Activated naive CD8-positive, alpha-beta T cell treated with anti-CD3 and anti-CD28 coated beads, Interleukin-2, amount 10 ng/mL, durations not matched to agents 7 days and 5 days (primary cell): ENCODE measurements at regions of chr19 and their contacts with region 1.

Region 1: GRCh38 chr19:39435499-39436349 is at the start of gene RPS16:
- DNase-seq: peak; percentile 100
- ATAC-seq: peak; percentile 87
- H3K4me3 Mint-ChIP-seq: peak within 1 kb of the TSS; percentile 100
- H3K27ac Mint-ChIP-seq: peak within 1 kb of the TSS; percentile 99
- H3K4me1 Mint-ChIP-seq: peaks cover 42% of the 10 kb centered on the region
- H3K27me3 Mint-ChIP-seq: peaks cover 3% of the 10 kb centered on the region
- total RNA-seq, gene RPS16: 2,294 to 2,369 TPM

Region 2: GRCh38 chr19:39293394-39293793 is 142.3 kb before region 1 on chr19:
- POLR2A ChIA-PET with region 1: no interaction called
- DNase-seq: no peak
- ATAC-seq: no peak
- H3K4me3 Mint-ChIP-seq: no peak overlapping the region
- H3K27ac Mint-ChIP-seq: no peak overlapping the region
- H3K4me1 Mint-ChIP-seq: peaks cover 26% of the 10 kb centered on the region
- H3K27me3 Mint-ChIP-seq: peaks cover 29% of the 10 kb centered on the region

Region 3: DNA sequence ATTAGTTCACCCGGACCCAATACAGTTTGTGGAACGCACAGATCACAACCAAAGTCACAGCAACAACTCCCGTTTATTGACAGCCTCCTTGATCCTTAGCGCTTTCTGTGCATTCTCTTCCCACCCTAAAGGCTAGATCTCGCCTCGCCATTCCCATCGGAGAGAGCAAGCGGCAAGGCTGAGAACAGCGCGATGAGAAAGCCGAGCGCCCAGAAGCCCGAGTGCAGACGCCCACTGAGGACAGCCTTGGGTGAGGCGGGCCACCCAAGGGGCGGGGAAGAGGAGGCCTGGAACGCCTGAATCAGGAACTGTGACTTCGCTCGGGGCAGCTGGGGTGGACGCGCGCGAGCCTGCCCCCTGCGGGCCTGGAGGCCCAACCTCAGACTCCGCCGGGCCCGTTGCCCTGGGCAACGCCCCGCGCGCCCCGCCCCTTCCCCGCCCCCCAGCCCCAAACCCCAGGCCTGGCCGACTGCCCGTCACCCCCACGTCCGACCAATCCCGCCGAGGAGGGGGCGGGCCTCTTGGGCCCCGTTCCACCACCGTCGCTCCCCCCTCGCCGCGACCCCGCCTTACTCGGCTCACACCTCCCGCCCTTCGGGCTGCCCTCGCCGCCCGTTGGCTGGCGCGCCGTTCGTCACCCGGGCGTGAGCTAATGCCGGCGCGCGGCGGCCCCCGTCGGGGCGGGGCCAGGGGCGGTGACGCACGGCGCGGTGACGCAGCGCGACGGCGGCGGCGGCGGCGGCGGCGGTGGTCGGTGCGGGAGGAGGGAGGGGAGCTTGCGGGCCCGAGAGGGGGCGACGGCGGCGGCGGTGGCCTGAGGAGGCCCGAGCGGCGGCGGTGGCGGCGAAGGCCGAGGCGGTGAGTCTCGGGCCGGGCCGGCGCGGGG is 93.8 kb before region 1 on chr19 and contains the start of gene SAMD4B:
- POLR2A ChIA-PET with region 1: interaction called, 12 read pairs
- DNase-seq: peak; percentile 99
- ATAC-seq: peak; percentile 89
- H3K4me3 Mint-ChIP-seq: peak within 1 kb of the TSS; percentile 96
- H3K27ac Mint-ChIP-seq: peak within 1 kb of the TSS; percentile 96
- H3K4me1 Mint-ChIP-seq: peaks cover 51% of the 10 kb centered on the region
- H3K27me3 Mint-ChIP-seq: no peaks in the 10 kb centered on the region
- total RNA-seq, gene SAMD4B: 47.8 to 51.3 TPM

Region 4: DNA sequence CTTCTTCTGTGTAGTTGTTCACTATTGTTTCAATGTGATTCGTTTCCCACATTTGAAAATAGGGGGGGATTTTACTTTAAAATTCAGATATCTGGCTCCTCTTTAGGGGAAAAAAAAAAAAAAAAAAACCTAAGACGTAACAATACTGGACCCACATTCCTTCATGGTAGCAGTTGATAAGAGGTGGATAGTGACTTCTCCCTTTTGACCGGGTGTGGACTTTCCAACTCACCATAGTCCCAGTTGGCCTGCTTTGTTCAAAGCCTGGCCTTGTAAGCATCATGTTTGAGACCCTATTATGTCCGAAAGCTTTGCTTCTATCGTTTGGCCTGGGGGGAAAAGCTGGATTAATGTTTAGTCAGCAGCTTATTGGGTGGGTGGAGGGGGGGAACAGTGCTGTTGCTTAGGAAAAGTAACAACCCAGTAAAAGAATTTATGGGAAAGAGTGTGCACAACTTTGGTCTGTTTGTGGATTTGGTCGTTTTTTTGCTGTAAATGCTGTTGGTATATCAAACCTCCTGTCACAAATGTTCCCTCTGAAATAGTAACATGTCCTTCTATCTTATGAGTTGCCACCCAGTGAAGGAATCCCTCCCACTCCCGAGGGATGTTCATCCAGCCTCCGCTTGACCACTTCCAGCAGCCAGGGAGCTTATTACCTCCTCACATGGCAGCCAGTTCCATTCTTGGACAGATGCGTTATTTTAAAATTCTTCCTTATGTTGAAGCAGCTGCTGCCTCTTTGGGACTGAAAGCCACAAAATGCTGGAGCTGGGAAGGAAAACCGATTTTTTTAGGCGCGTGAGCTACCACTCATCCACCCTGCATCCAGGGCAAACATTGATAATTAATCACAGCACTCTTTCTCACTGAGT is 83.1 kb before region 1 on chr19:
- POLR2A ChIA-PET with region 1: no interaction called
- DNase-seq: no peak
- ATAC-seq: no peak
- H3K4me3 Mint-ChIP-seq: no peak overlapping the region
- H3K27ac Mint-ChIP-seq: no peak overlapping the region
- H3K4me1 Mint-ChIP-seq: peaks cover 19% of the 10 kb centered on the region
- H3K27me3 Mint-ChIP-seq: no peaks in the 10 kb centered on the region

Region 5: DNA sequence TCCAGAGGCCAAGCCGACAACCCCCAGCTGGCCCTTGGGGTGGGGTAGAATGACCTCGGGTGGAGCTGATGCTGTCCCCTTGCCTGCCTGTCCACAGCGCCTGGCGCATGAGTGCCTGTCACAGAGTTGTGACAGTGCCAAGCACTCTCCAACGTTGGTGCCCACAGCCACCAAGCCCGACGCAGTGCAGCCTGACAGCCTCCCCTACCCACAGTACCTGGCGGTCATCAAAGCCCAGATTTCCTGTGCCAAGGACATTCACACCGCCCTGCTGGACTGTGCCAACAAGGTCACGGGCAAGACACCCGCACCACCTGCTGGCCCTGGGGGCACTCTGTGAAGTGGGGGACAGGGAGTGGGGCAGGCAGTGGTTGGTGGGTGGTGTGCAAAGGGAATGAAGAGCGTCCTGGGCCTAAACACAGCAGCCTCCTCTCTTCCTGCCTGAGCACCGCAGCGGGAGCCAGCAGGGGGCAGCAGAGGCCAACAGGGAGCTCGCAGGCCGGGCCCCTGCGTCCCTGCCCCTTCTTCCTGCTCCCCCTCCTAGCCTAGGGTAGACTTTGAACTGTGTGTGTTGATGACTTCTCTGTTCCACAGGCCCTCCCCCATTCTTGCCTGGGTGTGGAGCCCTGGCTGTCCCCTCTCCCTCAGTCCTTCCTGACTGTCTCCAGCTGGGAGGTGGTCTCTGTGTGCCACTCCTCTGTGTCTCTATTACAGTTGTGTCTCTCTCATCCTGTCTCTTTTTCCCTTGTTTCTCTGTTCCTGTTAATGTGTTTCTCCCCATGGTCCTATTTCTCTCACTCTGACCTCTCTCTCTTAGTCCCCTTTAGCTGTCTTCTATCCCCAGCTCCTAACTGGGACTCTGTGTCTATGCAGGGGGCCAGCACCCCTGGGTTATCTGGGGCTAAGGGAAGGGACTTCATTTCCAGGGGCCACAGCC is 38.1 kb before region 1 on chr19:
- POLR2A ChIA-PET with region 1: interaction called, 30 read pairs
- DNase-seq: peak; percentile 97
- ATAC-seq: peak; percentile 76
- H3K4me3 Mint-ChIP-seq: peak overlapping the region; percentile 77
- H3K27ac Mint-ChIP-seq: peak overlapping the region; percentile 91
- H3K4me1 Mint-ChIP-seq: peaks cover 41% of the 10 kb centered on the region
- H3K27me3 Mint-ChIP-seq: no peaks in the 10 kb centered on the region

Region 6: GRCh38 chr19:39412100-39412866 is 23.4 kb before region 1 on chr19 and contains the start of gene PLEKHG2:
- POLR2A ChIA-PET with region 1: interaction called, 40 read pairs
- DNase-seq: peak; percentile 98
- ATAC-seq: peak; percentile 69
- H3K4me3 Mint-ChIP-seq: peak within 1 kb of the TSS; percentile 97
- H3K27ac Mint-ChIP-seq: peak within 1 kb of the TSS; percentile 98
- H3K4me1 Mint-ChIP-seq: peaks cover 37% of the 10 kb centered on the region
- H3K27me3 Mint-ChIP-seq: peaks cover 2% of the 10 kb centered on the region
- total RNA-seq, gene PLEKHG2: 65.7 to 65.9 TPM

Region 7: GRCh38 chr19:39469036-39469435 is 33.3 kb after region 1 on chr19:
- POLR2A ChIA-PET with region 1: no interaction called
- DNase-seq: no peak
- ATAC-seq: no peak
- H3K4me3 Mint-ChIP-seq: no peak overlapping the region
- H3K27ac Mint-ChIP-seq: no peak overlapping the region
- H3K4me1 Mint-ChIP-seq: peaks cover 11% of the 10 kb centered on the region
- H3K27me3 Mint-ChIP-seq: no peaks in the 10 kb centered on the region

Region 8: GRCh38 chr19:39480337-39481228 is 44.9 kb after region 1 on chr19 and contains the start of gene TIMM50:
- POLR2A ChIA-PET with region 1: interaction called, 10 read pairs
- DNase-seq: peak; percentile 99
- ATAC-seq: peak; percentile 95
- H3K4me3 Mint-ChIP-seq: peak within 1 kb of the TSS; percentile 94
- H3K27ac Mint-ChIP-seq: peak within 1 kb of the TSS; percentile 94
- H3K4me1 Mint-ChIP-seq: peaks cover 21% of the 10 kb centered on the region
- H3K27me3 Mint-ChIP-seq: no peaks in the 10 kb centered on the region
- total RNA-seq, gene TIMM50: 42.8 to 46.8 TPM